BJ (cell line): ENCODE measurements at regions of chr17 and their contacts with region 1.

Region 1: GRCh38 chr17:79741751-79742588 is 11.2 kb downstream of the ENPP7 start:
- DNase-seq: no peak
- H3K4me3 ChIP-seq: no peak overlapping the region
- H3K27me3 ChIP-seq: peaks cover 37% of the 10 kb centered on the region
- CTCF ChIP-seq: peak; percentile 90

Region 2: DNA sequence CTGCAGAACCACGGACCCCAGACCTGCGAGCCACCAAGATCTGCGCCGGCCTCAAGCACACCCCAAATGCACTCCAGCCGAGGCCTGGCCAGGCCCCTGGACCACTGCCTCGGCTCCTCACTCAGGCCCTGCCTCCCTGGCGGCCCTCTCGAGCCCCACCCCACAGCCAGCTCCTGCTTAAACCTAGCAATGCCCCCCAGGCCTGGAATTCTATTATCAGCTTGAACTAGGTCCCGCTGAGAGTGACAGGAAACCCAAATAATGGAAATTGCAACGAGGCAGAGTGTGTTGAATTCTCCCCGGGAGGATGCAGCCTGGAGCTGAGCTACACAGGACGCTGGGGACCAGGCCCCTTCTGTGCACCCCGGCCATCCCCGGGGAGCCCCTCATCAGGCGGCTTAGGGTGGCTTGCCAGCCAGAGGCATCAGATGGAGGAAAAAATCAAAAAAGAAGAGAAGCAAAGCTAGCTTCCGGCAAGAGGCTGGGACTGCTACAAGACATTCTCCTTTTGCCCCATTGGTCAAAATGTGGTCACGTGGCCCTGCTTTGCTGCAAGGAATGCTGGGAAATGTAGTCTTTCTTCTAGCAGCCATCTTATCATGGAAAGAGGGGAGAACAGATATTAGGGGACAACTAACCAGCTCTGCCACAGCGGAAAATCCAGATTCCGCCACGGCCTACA is 13.6 kb before region 1 on chr17:
- CTCF ChIA-PET with region 1: interaction called, 19 read pairs
- POLR2A ChIA-PET with region 1: no interaction called
- DNase-seq: peak; percentile 43
- H3K4me3 ChIP-seq: peak overlapping the region; percentile 14
- H3K27me3 ChIP-seq: no peaks in the 10 kb centered on the region
- CTCF ChIP-seq: no peak

Region 3: DNA sequence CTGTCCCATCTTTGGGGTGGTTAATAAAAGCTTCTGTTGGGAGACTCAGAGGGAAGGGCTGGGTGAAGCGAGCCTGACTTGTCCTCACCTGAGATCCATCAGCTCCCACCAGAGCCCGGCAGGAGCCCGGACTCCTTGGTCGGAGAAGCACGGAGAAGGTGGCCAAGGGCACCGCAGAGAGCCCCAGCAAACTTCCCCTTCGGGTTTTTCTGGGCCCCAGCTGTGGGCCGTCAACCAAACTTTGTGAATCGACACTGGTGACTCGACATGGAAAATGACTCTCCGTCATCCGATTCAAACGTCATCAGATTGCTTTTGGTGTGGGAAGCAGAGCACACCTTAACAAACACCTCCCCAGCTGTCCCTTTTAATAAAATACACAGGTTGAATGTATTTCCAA is 10.2 kb after region 1 on chr17:
- CTCF ChIA-PET with region 1: interaction called, 24 read pairs
- POLR2A ChIA-PET with region 1: no interaction called
- DNase-seq: no peak
- H3K4me3 ChIP-seq: no peak overlapping the region
- H3K27me3 ChIP-seq: peaks cover 18% of the 10 kb centered on the region
- CTCF ChIP-seq: no peak

Region 4: DNA sequence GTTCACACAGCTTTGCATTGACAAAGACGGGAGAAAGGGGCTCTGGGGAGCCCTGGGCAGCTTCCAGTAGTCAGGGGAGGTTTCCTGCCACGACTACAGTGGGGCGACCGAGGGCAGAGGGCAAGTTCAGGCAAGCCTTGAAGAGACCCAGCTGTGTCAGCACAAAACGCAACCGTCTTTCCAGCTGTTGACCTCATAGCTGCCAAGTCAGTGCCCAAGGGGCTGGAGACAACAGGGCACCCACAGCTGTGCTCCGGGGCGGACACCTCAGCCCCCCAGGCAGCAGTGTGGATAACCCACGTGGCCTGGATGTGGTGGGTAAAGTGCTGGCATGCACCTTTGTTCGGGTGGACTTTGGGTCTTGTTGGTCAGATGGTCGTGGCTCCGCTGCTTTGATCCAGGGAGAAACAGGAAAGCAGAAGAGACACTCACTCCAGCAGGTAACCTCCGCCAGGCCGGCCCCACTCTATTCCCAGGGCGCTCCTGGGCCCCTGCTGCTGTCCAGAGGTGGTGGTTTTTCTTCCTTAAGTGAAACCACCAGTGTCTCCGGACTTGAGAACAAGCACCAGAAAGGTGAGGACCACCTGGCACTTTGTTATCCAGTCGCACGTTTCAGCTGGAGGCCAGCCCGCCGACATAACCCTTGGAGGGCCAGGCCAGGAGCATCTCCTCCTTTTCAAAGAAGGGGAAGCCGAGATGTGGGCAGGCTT is 18.4 kb after region 1 on chr17:
- CTCF ChIA-PET with region 1: interaction called, 12 read pairs
- POLR2A ChIA-PET with region 1: no interaction called
- DNase-seq: no peak
- H3K4me3 ChIP-seq: no peak overlapping the region
- H3K27me3 ChIP-seq: peaks cover 3% of the 10 kb centered on the region; the same call in 1 of the 2 replicates
- CTCF ChIP-seq: no peak

Region 5: DNA sequence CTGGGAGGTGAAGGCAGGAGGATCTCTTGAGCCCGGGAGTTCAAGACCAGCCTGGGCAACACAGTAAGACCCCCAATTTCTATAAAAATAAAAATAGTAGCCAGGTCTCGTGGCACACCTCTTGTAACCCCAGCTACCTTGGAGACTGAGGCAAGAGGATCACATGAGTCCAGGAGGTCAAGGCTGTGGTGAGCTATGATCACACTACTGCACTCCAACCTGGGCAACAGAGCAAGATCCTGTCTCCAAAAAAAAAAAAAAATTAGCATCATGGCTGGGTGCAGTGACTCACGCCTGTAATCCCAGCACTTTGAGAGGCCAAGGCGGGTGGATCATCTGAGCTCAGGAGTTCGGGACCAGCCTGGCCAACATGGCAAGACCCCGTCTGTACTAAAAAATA is 29.3 kb after region 1 on chr17:
- CTCF ChIA-PET with region 1: interaction called, 10 read pairs
- POLR2A ChIA-PET with region 1: no interaction called
- DNase-seq: no peak
- H3K4me3 ChIP-seq: no peak overlapping the region
- H3K27me3 ChIP-seq: peaks cover 18% of the 10 kb centered on the region
- CTCF ChIP-seq: no peak